ENCODE measurements at regions of chr1 and their contacts with region 1.

Region 1: GRCh38 chr1:229268505-229268904 is 2.4 kb upstream of the RAB4A start:
- DNase-seq: no peak
- H3K4me3 ChIP-seq: no peak overlapping the region
- H3K27ac ChIP-seq: peak overlapping the region; percentile 69 to 93 (median 86)
- H3K4me1 ChIP-seq: peaks cover 25 to 58% (median 27%) of the 10 kb centered on the region in 3 donors
- H3K27me3 ChIP-seq: no peaks in the 10 kb centered on the region
- CTCF ChIP-seq: no peak
- POLR2A ChIP-seq: no peak

Region 2: GRCh38 chr1:229070168-229070567 is 198.3 kb before region 1 on chr1:
- intact Hi-C with region 1: no loop called
- DNase-seq: peak; percentile 23
- H3K4me3 ChIP-seq: no peak overlapping the region
- H3K27ac ChIP-seq: peak overlapping the region in 1 of 4 donors; percentile 22
- H3K4me1 ChIP-seq: peaks cover 6 to 37% (median 11%) of the 10 kb centered on the region in 3 donors
- H3K27me3 ChIP-seq: no peaks in the 10 kb centered on the region
- CTCF ChIP-seq: no peak
- POLR2A ChIP-seq: no peak

Region 3: GRCh38 chr1:229341774-229342655 is 73.5 kb after region 1 on chr1:
- intact Hi-C with region 1: loop called (anchors 5 kb)
- DNase-seq: peak; percentile 45
- H3K4me3 ChIP-seq: peak overlapping the region; percentile 69 to 90 (median 81)
- H3K27ac ChIP-seq: peak overlapping the region; percentile 87 to 98 (median 90)
- H3K4me1 ChIP-seq: peaks cover 7 to 29% (median 9%) of the 10 kb centered on the region in 3 donors
- H3K27me3 ChIP-seq: peaks cover 0 to 28% (median 0%) of the 10 kb centered on the region in 4 donors
- CTCF ChIP-seq: no peak
- POLR2A ChIP-seq: peak in 2 of 4 donors; percentile 36 to 82

Region 4: DNA sequence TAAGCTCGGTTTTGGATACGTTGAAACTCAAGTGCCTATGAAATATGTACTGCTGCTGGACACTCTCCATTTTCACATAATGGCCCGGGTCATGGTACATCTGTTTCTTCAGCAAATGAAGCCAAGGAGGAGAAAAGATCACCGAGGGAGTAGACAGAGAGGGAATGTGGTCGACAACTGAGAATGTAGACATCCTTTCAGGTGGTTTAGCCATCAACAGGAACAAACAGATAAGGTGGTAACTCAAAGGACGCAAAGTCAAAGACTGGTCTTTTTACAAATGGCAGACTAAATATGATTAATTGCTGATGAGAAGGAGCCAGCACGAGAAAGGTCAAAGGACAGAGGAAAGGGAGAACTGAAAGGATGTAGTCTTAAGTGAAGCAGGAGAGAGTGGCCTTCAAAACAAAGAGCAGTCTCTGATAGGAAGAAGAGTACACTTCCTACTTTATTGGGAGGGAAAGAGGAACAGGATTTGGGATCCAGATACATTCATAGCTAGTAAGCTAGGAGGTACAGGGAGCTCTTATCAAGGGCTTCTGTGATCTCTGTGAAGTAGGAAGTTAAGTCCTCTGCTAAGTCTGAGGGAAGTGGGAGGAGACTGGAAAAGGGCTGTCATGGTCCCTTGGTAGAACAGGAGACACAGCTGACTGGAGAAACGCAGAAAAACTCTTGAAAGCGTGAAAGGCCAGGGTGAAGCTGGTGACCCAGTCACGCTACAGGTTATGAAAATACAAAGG is 211.3 kb after region 1 on chr1:
- intact Hi-C with region 1: loop called (anchors 5 kb)
- DNase-seq: no peak
- H3K4me3 ChIP-seq: no peak overlapping the region
- H3K27ac ChIP-seq: no peak overlapping the region
- H3K4me1 ChIP-seq: no peaks in the 10 kb centered on the region
- H3K27me3 ChIP-seq: no peaks in the 10 kb centered on the region
- CTCF ChIP-seq: no peak
- POLR2A ChIP-seq: no peak

Region 5: GRCh38 chr1:229730573-229730972 is 462.1 kb after region 1 on chr1:
- intact Hi-C with region 1: no loop called
- DNase-seq: no peak
- H3K4me3 ChIP-seq: no peak overlapping the region
- H3K27ac ChIP-seq: no peak overlapping the region
- H3K4me1 ChIP-seq: no peaks in the 10 kb centered on the region
- H3K27me3 ChIP-seq: no peaks in the 10 kb centered on the region
- CTCF ChIP-seq: no peak
- POLR2A ChIP-seq: no peak